ENCODE measurements at regions of chr21 and their contacts with region 1.

Region 1: GRCh38 chr21:15064576-15065391 is at the start of gene NRIP1:
- DNase-seq: peak; percentile 66 to 93 (median 85)
- ATAC-seq: peak; percentile 78
- H3K4me3 ChIP-seq: peak within 1 kb of the TSS; percentile 75 to 79
- H3K4me3 Mint-ChIP-seq: peak within 1 kb of the TSS; percentile 97
- H3K27ac ChIP-seq: peak within 1 kb of the TSS; percentile 82 to 83
- H3K27ac Mint-ChIP-seq: peak within 1 kb of the TSS; percentile 98
- H3K4me1 ChIP-seq: peaks cover 29% of the 10 kb centered on the region
- H3K4me1 Mint-ChIP-seq: peaks cover 46% of the 10 kb centered on the region
- H3K27me3 ChIP-seq: no peaks in the 10 kb centered on the region
- H3K27me3 Mint-ChIP-seq: no peaks in the 10 kb centered on the region
- CTCF ChIP-seq: no peak
- total RNA-seq, gene NRIP1: 62.4 to 64.3 TPM

Region 2: DNA sequence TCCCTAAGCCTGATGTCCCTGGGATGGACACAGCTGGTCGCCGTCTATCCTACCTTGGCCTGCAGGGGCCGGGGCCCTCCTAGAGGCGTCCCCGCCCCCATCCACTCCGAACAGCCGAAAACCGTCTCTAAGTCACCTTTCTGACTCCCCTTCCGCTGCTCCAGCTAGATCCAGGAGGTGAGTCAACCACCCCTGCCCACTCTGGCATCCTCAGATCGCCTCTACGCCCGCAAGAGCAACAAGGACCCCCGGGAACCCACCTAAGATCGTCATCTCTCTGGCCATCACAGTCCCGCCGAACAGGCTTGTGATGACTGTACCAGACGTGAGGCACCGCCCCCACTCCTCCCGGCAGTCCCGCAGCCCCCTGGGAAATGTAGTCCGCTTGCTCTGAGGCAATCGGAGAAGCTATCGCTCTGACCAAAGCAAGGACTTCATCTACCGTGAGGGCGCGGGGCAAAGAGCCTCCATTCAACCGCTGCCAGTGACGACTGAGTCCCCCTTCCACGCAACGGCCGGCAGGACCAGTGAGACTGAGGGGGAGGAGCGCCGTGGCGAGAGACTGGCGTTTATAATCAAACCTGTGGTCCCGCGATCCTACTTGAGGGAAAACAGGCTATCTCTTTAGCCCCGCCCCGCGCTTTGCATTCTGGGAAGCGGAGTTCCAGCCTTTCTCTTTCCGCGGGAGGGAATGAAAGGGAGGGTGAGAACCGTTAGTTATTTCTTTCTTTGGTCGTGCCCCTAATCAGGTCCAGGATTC is 681.8 kb before region 1 on chr21 and contains the start of gene HSPA13:
- CTCF ChIA-PET with region 1: no interaction called
- POLR2A ChIA-PET with region 1: no interaction called
- intact Hi-C with region 1: loop called in 1 of 2 experiments (anchors 2 kb)
- DNase-seq: peak; percentile 97 to 100 (median 99)
- ATAC-seq: peak; percentile 91
- H3K4me3 ChIP-seq: peak within 1 kb of the TSS; percentile 65 to 92
- H3K4me3 Mint-ChIP-seq: peak within 1 kb of the TSS; percentile 100
- H3K27ac ChIP-seq: peak within 1 kb of the TSS; percentile 94 to 96
- H3K27ac Mint-ChIP-seq: peak within 1 kb of the TSS; percentile 100
- H3K4me1 ChIP-seq: peaks cover 24% of the 10 kb centered on the region
- H3K4me1 Mint-ChIP-seq: peaks cover 40% of the 10 kb centered on the region
- H3K27me3 ChIP-seq: no peaks in the 10 kb centered on the region
- H3K27me3 Mint-ChIP-seq: no peaks in the 10 kb centered on the region
- CTCF ChIP-seq: no peak
- total RNA-seq, gene HSPA13: 54.3 to 58.1 TPM

Region 3: DNA sequence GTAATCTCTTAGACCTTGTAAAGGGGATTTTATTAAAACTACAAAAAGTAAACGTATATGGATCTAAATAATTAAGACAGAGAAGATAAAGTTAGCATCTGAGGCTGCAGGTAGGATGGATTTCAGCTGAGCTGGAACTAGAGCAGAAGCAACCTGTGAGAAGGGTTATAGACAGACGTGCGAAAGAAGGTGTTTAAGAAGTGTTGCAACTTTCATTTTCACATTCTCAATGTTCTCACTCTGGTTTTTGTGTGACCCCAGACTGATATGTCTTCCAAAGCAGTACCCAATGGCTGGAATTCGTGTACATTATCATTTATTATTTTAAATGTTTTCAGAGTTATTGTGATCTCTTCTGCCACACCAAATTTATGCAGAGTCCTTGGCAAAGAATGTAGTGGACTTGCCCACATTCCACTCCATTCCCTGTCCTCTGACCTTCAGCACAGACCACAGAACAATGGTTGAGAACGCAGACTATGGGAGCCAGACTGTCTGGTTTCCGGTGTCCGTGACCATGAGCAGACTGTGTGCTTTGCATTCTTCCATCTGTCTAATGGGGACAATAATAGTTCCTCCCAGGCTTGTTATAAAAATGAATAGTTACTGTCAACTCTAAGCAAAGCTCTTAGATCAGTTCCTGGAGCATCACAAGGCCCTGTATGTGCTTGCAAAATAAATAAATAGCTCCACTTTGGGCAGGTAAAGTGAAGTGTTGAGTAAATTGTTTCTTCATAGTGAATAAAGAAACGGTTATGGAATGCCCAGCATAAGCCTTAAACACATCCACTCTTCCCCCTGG is 378.1 kb before region 1 on chr21:
- CTCF ChIA-PET with region 1: no interaction called
- POLR2A ChIA-PET with region 1: no interaction called
- intact Hi-C with region 1: loop called in 1 of 2 experiments (anchors 10 kb)
- DNase-seq: peak in 2 of 9 experiments; percentile 39 to 43
- ATAC-seq: no peak
- H3K4me3 ChIP-seq: no peak overlapping the region
- H3K4me3 Mint-ChIP-seq: peak overlapping the region; percentile 44
- H3K27ac ChIP-seq: peak overlapping the region in 1 of 2 experiments; percentile 5
- H3K27ac Mint-ChIP-seq: peak overlapping the region; percentile 11
- H3K4me1 ChIP-seq: no peaks in the 10 kb centered on the region
- H3K4me1 Mint-ChIP-seq: peaks cover 29% of the 10 kb centered on the region
- H3K27me3 ChIP-seq: no peaks in the 10 kb centered on the region
- H3K27me3 Mint-ChIP-seq: no peaks in the 10 kb centered on the region
- CTCF ChIP-seq: no peak

Region 4: DNA sequence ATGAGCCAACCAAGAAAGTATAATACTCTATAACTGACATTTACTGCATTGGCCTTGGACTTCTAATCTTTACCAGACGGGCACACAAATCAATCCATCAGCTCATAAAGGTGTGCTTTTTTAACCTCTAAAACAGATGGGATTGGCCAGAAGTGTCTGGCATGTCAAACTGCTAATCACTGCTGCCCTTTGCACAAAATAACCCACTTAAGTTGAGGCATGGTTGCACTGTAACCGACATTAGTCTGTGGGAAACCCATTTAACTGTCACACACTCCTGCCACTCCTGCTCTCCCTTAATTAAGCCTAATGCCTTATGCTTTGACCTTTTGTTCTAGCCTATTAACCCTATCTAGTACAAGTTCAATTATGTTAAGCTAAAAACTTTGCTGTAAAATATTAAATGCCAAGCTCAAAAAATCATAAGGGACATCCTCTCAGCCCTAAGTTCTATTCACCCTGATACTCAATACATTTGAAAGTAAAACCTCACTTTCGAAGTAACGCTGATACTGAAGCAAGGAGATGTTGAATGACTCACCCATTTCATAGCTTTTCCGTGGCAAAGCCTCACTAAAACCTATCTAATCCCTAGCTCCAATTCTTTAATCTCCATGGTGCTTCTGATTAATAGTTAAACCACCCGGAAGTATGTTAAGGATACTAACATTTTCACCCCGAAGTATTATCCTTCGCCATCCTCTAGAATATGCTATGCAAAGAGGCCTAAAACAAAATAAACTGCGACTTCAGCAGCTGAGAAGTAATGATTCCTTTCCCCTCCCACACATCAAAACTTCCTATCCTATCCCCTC is 12.9 kb before region 1 on chr21:
- CTCF ChIA-PET with region 1: interaction called, 3 read pairs
- POLR2A ChIA-PET with region 1: interaction called, 5 read pairs
- intact Hi-C with region 1: loop called in 1 of 2 experiments (anchors 1 kb)
- DNase-seq: no peak
- ATAC-seq: peak; percentile 49
- H3K4me3 ChIP-seq: no peak overlapping the region
- H3K4me3 Mint-ChIP-seq: peak overlapping the region; percentile 73
- H3K27ac ChIP-seq: no peak overlapping the region
- H3K27ac Mint-ChIP-seq: peak overlapping the region; percentile 62
- H3K4me1 ChIP-seq: peaks cover 48% of the 10 kb centered on the region
- H3K4me1 Mint-ChIP-seq: peaks cover 76% of the 10 kb centered on the region
- H3K27me3 ChIP-seq: no peaks in the 10 kb centered on the region
- H3K27me3 Mint-ChIP-seq: no peaks in the 10 kb centered on the region
- CTCF ChIP-seq: no peak

Region 5: GRCh38 chr21:15552914-15553494 is 488.2 kb after region 1 on chr21:
- CTCF ChIA-PET with region 1: interaction called, 8 read pairs
- POLR2A ChIA-PET with region 1: no interaction called
- intact Hi-C with region 1: loop called (anchors 2 to 5 kb)
- DNase-seq: peak in 2 of 9 experiments; percentile 19 to 33
- ATAC-seq: no peak
- H3K4me3 ChIP-seq: no peak overlapping the region
- H3K4me3 Mint-ChIP-seq: no peak overlapping the region
- H3K27ac ChIP-seq: no peak overlapping the region
- H3K27ac Mint-ChIP-seq: no peak overlapping the region
- H3K4me1 ChIP-seq: peaks cover 8% of the 10 kb centered on the region
- H3K4me1 Mint-ChIP-seq: peaks cover 14% of the 10 kb centered on the region
- H3K27me3 ChIP-seq: no peaks in the 10 kb centered on the region
- H3K27me3 Mint-ChIP-seq: no peaks in the 10 kb centered on the region
- CTCF ChIP-seq: peak; percentile 71

Region 6: DNA sequence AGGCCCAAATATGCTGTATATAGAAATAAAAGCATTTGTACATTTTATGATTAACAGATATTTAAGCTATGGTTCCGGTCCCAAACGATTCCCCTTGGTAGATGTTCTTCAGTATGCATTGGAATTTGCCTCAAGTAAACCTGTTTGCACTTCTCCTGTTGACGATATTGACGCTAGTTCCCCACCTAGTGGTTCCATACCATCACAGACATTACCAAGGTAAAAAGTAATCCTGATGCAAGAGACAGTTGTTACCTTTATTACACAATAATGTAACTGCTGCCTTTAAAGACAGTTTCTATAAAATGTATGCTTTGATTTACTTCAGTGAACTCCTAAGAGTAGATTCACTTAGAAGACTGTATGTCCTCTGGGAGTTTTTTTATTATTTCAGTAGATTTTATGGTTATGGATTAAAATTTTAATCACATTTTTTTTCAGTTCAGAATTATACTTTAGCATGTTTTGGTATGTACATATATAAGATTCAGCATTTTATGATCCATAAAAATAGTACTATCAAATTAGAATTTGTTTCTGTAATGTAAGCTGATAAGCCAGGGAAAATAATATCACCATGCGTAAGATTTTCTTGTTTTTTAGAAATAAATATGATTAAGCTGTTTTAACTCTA is 761.5 kb after region 1 on chr21:
- CTCF ChIA-PET with region 1: no interaction called
- POLR2A ChIA-PET with region 1: no interaction called
- intact Hi-C with region 1: loop called (anchors 5 to 10 kb)
- DNase-seq: peak in 4 of 9 experiments; percentile 23 to 75 (median 48)
- ATAC-seq: peak; percentile 75
- H3K4me3 ChIP-seq: no peak overlapping the region
- H3K4me3 Mint-ChIP-seq: no peak overlapping the region
- H3K27ac ChIP-seq: no peak overlapping the region
- H3K27ac Mint-ChIP-seq: peak overlapping the region; percentile 3
- H3K4me1 ChIP-seq: peaks cover 26% of the 10 kb centered on the region
- H3K4me1 Mint-ChIP-seq: peaks cover 52% of the 10 kb centered on the region
- H3K27me3 ChIP-seq: no peaks in the 10 kb centered on the region
- H3K27me3 Mint-ChIP-seq: no peaks in the 10 kb centered on the region
- CTCF ChIP-seq: peak; percentile 72

Measured in CD8-positive, alpha-beta T cell (primary cell).